Left ventricle myocardium inferior (tissue), 1 donor: ENCODE measurements at regions of chr11 and their contacts with region 1.

Region 1: DNA sequence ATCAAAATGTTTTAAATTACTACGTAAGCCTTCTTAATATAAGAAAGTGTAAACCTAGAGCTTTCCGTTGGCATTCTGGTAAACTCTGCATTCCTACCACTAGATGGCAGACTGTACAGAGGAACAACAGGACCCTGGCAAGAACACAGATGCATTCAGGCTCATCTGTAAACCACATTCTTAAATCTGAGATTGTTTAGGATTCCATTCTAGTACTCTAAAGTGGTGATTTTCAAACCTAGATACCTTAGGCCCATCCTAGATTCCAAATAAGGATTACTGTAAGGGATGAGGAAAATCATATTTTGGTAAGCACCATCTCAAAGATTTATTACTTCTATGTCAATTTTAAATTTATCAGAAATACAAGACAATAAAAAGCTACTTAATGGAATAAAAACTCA is 26.9 kb downstream of the PICALM start:
- DNase-seq: no peak
- H3K4me3 ChIP-seq: peak overlapping the region; percentile 52
- H3K27ac ChIP-seq: peak overlapping the region; percentile 72
- H3K4me1 ChIP-seq: peaks cover 87% of the 10 kb centered on the region
- H3K27me3 ChIP-seq: no peaks in the 10 kb centered on the region
- CTCF ChIP-seq: peak; percentile 92

Region 2: GRCh38 chr11:85961930-85962363 is 80.0 kb before region 1 on chr11:
- intact Hi-C with region 1: no loop called
- DNase-seq: no peak
- H3K4me3 ChIP-seq: no peak overlapping the region
- H3K27ac ChIP-seq: no peak overlapping the region
- H3K4me1 ChIP-seq: peaks cover 23% of the 10 kb centered on the region
- H3K27me3 ChIP-seq: no peaks in the 10 kb centered on the region
- CTCF ChIP-seq: no peak

Region 3: DNA sequence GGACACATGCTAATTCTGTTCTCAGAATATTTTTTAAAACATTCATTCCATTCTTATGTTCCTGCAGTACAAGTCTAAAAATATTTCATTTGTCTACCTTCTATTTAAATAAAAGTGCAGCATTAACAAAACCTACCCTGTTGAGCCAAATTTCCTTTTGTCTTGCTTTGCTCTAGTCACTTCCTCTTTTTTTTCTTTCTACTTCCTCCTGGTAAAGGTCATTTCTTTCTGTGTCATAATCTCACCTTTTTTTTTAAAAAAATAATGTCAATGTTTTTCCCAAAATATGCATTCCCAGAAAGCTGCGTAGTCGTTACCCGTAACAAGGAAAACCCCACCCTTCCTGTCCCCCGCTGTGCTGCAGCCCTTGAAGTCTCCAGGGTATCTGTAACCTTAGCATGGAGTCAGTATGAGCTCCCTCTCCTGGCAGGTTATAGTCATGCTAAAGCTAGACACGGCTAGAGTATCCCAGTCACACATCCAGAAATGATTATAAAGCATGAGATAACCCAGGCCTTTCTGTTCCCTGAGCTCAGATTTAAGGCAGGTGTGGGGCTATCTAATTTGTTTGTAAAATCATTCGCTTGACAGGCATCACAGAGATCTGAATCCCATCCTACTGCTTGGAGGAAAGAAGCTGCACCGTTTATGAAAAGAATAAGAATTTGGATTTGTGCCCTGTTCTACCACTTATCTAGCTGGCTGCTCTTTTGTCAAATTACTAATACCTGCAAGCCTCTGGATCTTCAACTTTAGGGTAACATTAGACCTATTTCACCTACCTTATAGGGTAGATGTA is 151.5 kb after region 1 on chr11:
- intact Hi-C with region 1: loop called (anchors 10 kb)
- DNase-seq: peak; percentile 69
- H3K4me3 ChIP-seq: peak overlapping the region; percentile 53
- H3K27ac ChIP-seq: peak overlapping the region; percentile 77
- H3K4me1 ChIP-seq: peaks cover 21% of the 10 kb centered on the region
- H3K27me3 ChIP-seq: no peaks in the 10 kb centered on the region
- CTCF ChIP-seq: peak; percentile 90